Left ventricle myocardium inferior (tissue), 1 donor: ENCODE measurements at regions of chr2 and their contacts with region 1.

Region 1: GRCh38 chr2:174025271-174026123 is 60.3 kb upstream of the SP3 start:
- DNase-seq: peak; percentile 84
- H3K4me3 ChIP-seq: peak overlapping the region; percentile 37
- H3K27ac ChIP-seq: peak overlapping the region; percentile 94
- H3K4me1 ChIP-seq: peaks cover 58% of the 10 kb centered on the region
- H3K27me3 ChIP-seq: no peaks in the 10 kb centered on the region
- CTCF ChIP-seq: no peak

Region 2: DNA sequence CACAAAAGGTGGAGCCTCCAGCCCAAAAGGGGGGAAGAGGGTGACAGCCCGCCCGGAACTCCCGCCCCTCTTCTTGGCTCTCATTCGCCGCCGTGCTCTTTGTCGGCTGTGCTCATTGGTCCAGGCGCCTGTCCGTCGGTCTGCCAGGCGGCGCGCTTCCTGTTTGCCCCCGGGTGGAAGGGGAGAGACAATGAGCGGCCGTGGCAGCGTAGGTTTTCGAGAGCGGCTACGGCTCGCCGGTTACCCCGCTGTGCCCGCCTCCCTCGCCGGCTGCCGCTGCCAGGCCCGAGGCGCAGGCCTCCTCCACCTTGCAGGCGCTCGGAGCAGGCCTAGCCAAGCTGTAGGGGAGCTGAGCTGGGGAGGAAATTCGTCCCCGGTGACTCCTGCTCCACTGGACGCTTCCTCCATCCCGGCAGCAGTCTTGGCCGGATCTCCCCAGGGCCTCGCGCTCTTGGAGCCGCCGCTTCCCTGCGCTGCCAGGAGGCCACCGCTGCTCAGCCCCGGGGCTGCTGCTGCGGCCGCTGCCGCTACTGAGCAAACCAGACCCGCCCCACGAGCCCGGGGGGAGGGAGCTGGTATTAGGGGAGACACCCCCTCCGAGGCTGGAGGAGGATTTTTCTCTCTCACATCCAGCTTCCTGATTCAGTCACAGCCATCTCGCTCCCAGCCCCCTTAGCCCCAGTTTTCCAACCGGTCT is 60.0 kb before region 1 on chr2 and contains the start of gene SP3:
- intact Hi-C with region 1: loop called (anchors 5 kb)
- DNase-seq: peak; percentile 98
- H3K4me3 ChIP-seq: peak within 1 kb of the TSS; percentile 99
- H3K27ac ChIP-seq: peak within 1 kb of the TSS; percentile 100
- H3K4me1 ChIP-seq: peaks cover 58% of the 10 kb centered on the region
- H3K27me3 ChIP-seq: no peaks in the 10 kb centered on the region
- CTCF ChIP-seq: peak; percentile 20
- total RNA-seq, gene SP3: 32.1 TPM

Region 3: GRCh38 chr2:173982918-173983317 is 42.6 kb before region 1 on chr2:
- intact Hi-C with region 1: no loop called
- DNase-seq: no peak
- H3K4me3 ChIP-seq: no peak overlapping the region
- H3K27ac ChIP-seq: peak overlapping the region; percentile 27
- H3K4me1 ChIP-seq: peaks cover 58% of the 10 kb centered on the region
- H3K27me3 ChIP-seq: no peaks in the 10 kb centered on the region
- CTCF ChIP-seq: no peak